ENCODE measurements at regions of chr3 and their contacts with region 1.

Region 1: GRCh38 chr3:116614795-116615362 is 94.7 kb upstream of the TUSC7 start:
- DNase-seq: peak; percentile 18
- H3K4me3 Mint-ChIP-seq: no peak overlapping the region
- H3K27ac Mint-ChIP-seq: no peak overlapping the region
- H3K4me1 Mint-ChIP-seq: no peaks in the 10 kb centered on the region
- H3K27me3 Mint-ChIP-seq: peaks cover 14% of the 10 kb centered on the region
- CTCF ChIP-seq: peak; percentile 23

Region 2: GRCh38 chr3:116601206-116601605 is 13.7 kb before region 1 on chr3:
- CTCF ChIA-PET with region 1: interaction called, 16 read pairs
- POLR2A ChIA-PET with region 1: no interaction called
- intact Hi-C with region 1: no loop called
- DNase-seq: no peak
- H3K4me3 Mint-ChIP-seq: no peak overlapping the region
- H3K27ac Mint-ChIP-seq: no peak overlapping the region
- H3K4me1 Mint-ChIP-seq: no peaks in the 10 kb centered on the region
- H3K27me3 Mint-ChIP-seq: peaks cover 20% of the 10 kb centered on the region
- CTCF ChIP-seq: no peak

Region 3: GRCh38 chr3:116757315-116757714 is 142.4 kb after region 1 on chr3:
- CTCF ChIA-PET with region 1: interaction called, 18 read pairs
- POLR2A ChIA-PET with region 1: no interaction called
- intact Hi-C with region 1: loop called (anchors 1 kb)
- DNase-seq: no peak
- H3K4me3 Mint-ChIP-seq: no peak overlapping the region
- H3K27ac Mint-ChIP-seq: no peak overlapping the region
- H3K4me1 Mint-ChIP-seq: no peaks in the 10 kb centered on the region
- H3K27me3 Mint-ChIP-seq: peaks cover 84% of the 10 kb centered on the region
- CTCF ChIP-seq: no peak

Measured in MCF 10A (cell line).